ENCODE measurements at regions of chr4 and their contacts with region 1.

Region 1: DNA sequence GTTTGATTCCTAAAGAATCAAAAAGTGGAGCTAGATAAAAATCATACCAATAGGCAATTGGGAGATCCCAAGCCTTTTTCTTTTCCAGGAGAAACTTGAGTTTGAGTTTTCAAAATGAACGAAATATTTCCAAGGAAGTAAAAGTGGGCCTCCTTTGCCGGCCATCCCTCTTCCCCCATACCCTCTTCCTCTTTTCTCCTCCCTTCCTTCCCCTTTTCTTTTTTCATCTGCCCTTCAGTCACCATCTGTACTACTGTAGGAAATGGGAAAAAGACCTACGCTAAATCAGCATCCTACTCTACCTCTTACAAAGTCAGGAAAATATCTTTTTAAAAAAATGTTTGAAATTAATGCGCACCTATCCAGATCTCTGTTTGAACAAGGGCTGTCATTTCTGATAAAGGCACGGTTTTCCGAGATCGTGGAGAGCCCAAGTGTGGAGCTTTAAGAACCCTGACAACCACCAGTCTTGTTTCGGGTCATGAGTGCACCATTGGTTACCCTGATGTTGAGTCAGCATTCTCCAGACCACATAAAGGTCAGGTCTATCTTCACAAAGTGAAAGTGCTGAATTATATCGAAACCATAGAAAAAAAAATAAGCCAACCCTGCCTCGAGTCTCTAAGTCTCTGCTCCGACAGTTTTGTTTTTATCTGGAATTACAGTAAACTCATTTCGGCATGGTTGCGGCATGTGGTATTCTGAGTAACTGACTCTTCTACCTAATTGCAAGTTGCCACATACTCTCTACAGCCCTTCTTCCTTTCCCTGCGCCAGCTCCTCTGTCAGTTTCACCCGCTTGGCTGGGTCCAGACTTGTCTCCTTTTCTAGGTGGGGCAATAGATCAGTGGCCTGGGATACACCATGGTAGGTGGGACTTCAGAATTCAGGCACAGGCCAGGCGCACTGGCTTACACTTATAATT is 140.2 kb upstream of the KLF3 start:
- DNase-seq: peak; percentile 77
- H3K4me3 Mint-ChIP-seq: peak overlapping the region; percentile 28
- H3K27ac Mint-ChIP-seq: peak overlapping the region; percentile 66
- H3K4me1 Mint-ChIP-seq: peaks cover 28% of the 10 kb centered on the region
- H3K27me3 Mint-ChIP-seq: peaks cover 69% of the 10 kb centered on the region

Region 2: GRCh38 chr4:38310446-38311043 is 213.2 kb before region 1 on chr4:
- CTCF ChIA-PET with region 1: no interaction called
- POLR2A ChIA-PET with region 1: interaction called, 10 read pairs
- DNase-seq: peak; percentile 82
- H3K4me3 Mint-ChIP-seq: peak overlapping the region; percentile 36
- H3K27ac Mint-ChIP-seq: peak overlapping the region; percentile 80
- H3K4me1 Mint-ChIP-seq: peaks cover 68% of the 10 kb centered on the region
- H3K27me3 Mint-ChIP-seq: peaks cover 43% of the 10 kb centered on the region

Region 3: DNA sequence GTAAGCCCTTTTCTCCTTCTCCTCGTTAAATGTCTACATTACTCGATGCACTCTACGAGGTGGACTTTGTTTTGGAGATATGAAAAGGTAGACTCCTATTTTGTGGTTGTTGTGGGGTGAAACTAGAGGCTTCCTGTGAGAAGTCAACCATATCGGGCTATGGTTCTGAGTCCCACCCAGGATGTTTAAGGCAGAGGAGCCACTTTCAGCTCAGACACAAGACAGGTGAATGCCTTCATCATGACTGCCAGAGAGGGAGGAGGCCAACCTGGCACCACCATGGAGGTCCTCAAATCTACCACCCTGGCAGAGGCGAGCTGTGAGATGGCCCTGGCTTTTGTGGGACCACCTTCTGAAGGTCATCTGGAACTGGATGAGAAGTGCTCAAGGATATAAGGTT is 14.2 kb before region 1 on chr4:
- CTCF ChIA-PET with region 1: interaction called, 4 read pairs
- POLR2A ChIA-PET with region 1: interaction called, 25 read pairs
- DNase-seq: peak; percentile 43
- H3K4me3 Mint-ChIP-seq: peak overlapping the region; percentile 26
- H3K27ac Mint-ChIP-seq: peak overlapping the region; percentile 56
- H3K4me1 Mint-ChIP-seq: peaks cover 49% of the 10 kb centered on the region
- H3K27me3 Mint-ChIP-seq: peaks cover 70% of the 10 kb centered on the region

Region 4: GRCh38 chr4:38681281-38681991 is 157.7 kb after region 1 on chr4:
- CTCF ChIA-PET with region 1: no interaction called
- POLR2A ChIA-PET with region 1: no interaction called
- DNase-seq: no peak
- H3K4me3 Mint-ChIP-seq: no peak overlapping the region
- H3K27ac Mint-ChIP-seq: no peak overlapping the region
- H3K4me1 Mint-ChIP-seq: peaks cover 21% of the 10 kb centered on the region
- H3K27me3 Mint-ChIP-seq: no peaks in the 10 kb centered on the region